ENCODE measurements at regions of chr12 and their contacts with region 1.

Region 1: GRCh38 chr12:14828896-14829295 is 14.4 kb downstream of the ART4 start:
- DNase-seq: no peak
- CTCF ChIP-seq: no peak

Region 2: GRCh38 chr12:14845350-14845750 is 16.5 kb after region 1 on chr12:
- CTCF ChIA-PET with region 1: interaction called, 20 read pairs
- POLR2A ChIA-PET with region 1: no interaction called
- DNase-seq: peak; percentile 64
- CTCF ChIP-seq: peak; percentile 71

Region 3: DNA sequence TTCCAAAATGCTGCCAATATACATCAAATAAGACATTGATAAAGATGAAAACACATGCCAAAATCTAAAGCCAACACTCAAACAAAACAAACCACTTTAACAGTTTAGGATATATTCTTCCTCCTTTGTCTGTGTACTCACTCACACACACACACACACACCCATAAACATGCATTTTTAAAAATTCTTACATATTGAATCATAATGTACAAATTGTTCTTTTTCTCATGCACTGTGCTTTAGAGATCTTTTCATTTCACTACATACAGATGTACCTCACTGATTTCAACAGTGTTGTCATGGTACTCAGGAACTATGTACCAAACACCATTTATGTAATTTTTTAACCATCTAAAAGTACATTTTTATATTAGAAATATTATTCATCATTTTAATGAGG is 401.9 kb after region 1 on chr12:
- CTCF ChIA-PET with region 1: no interaction called
- POLR2A ChIA-PET with region 1: no interaction called
- DNase-seq: no peak
- CTCF ChIP-seq: no peak

Measured in GM10248 (cell line).